ENCODE measurements at regions of chr19 and their contacts with region 1.

Region 1: GRCh38 chr19:54023191-54023590 is 31.8 kb downstream of the CACNG6 start:
- DNase-seq: no peak
- ATAC-seq: no peak
- H3K4me3 ChIP-seq: no peak overlapping the region
- H3K27ac ChIP-seq: no peak overlapping the region
- H3K4me1 ChIP-seq: peaks cover 12 to 25% of the 10 kb centered on the region in 2 experiments
- H3K27me3 ChIP-seq: no peaks in the 10 kb centered on the region
- CTCF ChIP-seq: no peak
- POLR2A ChIP-seq: no peak
- RAD21 ChIP-seq: no peak

Region 2: GRCh38 chr19:53792721-53793433 is 230.3 kb before region 1 on chr19:
- CTCF ChIA-PET with region 1: interaction called, 18 read pairs
- POLR2A ChIA-PET with region 1: no interaction called
- RAD21 ChIA-PET with region 1: no interaction called
- intact Hi-C with region 1: loop called (anchors 1 kb)
- DNase-seq: peak; percentile 82
- ATAC-seq: peak; percentile 100
- H3K4me3 ChIP-seq: no peak overlapping the region
- H3K27ac ChIP-seq: no peak overlapping the region
- H3K4me1 ChIP-seq: no peaks in the 10 kb centered on the region
- H3K27me3 ChIP-seq: no peaks in the 10 kb centered on the region
- CTCF ChIP-seq: peak; percentile 99
- POLR2A ChIP-seq: no peak
- RAD21 ChIP-seq: peak; percentile 90

Region 3: GRCh38 chr19:53808710-53809125 is 214.5 kb before region 1 on chr19:
- CTCF ChIA-PET with region 1: interaction called, 60 read pairs
- POLR2A ChIA-PET with region 1: no interaction called
- RAD21 ChIA-PET with region 1: interaction called, 4 to 11 read pairs
- intact Hi-C with region 1: loop called (anchors 1 kb)
- DNase-seq: peak; percentile 45
- ATAC-seq: peak; percentile 90
- H3K4me3 ChIP-seq: no peak overlapping the region
- H3K27ac ChIP-seq: no peak overlapping the region
- H3K4me1 ChIP-seq: no peaks in the 10 kb centered on the region
- H3K27me3 ChIP-seq: no peaks in the 10 kb centered on the region
- CTCF ChIP-seq: peak; percentile 66 to 71 (median 67); a peak in 5 of 6 replicates
- POLR2A ChIP-seq: no peak
- RAD21 ChIP-seq: peak; percentile 87

Region 4: GRCh38 chr19:53844849-53845246 is 178.3 kb before region 1 on chr19:
- CTCF ChIA-PET with region 1: interaction called, 22 read pairs
- POLR2A ChIA-PET with region 1: interaction called, 3 read pairs
- RAD21 ChIA-PET with region 1: interaction called in 1 of 2 experiments, 4 read pairs
- intact Hi-C with region 1: loop called (anchors 1 kb)
- DNase-seq: no peak
- ATAC-seq: no peak
- H3K4me3 ChIP-seq: no peak overlapping the region
- H3K27ac ChIP-seq: no peak overlapping the region
- H3K4me1 ChIP-seq: peaks cover 14 to 37% of the 10 kb centered on the region in 2 experiments
- H3K27me3 ChIP-seq: no peaks in the 10 kb centered on the region
- CTCF ChIP-seq: no peak
- POLR2A ChIP-seq: no peak
- RAD21 ChIP-seq: no peak

Region 5: DNA sequence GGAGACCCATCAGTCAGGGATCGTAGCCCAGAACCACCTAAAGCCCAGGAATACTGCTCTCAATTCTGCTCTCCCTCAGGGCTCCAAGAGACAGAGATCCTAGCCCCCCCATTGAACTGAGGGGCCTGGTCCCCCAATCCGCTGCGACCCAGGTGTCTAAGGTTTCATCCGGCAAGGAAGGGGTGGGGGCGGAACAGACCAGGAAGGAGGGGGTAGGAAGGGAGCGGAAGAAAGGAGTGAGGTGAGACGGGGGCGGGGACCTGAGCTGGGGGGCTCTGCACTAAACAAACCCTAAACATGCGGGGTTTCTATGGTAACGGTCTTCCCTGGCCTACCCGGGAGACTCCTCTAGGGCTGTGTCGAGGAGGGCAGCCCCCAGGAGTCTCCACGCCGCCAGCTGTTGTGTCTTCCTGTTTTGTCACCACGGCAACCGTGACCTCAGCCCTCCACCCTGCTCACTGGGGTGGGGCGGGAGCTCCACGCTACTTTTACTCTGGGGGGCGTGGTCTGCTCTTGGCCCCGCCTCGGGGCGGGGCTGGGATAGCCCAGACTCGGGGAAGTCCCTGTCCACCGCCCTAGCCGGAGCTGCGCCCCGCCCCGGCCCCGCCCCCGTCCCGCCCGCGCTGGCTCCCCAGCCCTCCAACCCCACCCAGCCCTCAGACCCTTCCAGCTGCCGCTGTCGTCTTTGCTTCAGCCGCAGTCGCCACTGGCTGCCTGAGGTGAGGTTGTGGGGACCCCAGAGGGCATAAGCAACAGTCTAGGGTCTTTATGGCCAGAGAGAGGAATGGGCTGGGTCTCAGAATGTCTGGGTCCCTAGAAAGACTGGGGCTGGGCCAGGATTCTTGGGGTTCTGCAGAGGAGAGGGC is 155.7 kb before region 1 on chr19 and contains the start of gene MYADM:
- CTCF ChIA-PET with region 1: interaction called, 21 read pairs
- POLR2A ChIA-PET with region 1: interaction called, 4 read pairs
- RAD21 ChIA-PET with region 1: no interaction called
- intact Hi-C with region 1: no loop called
- DNase-seq: peak; percentile 95
- ATAC-seq: peak; percentile 59
- H3K4me3 ChIP-seq: peak within 1 kb of the TSS; percentile 75 to 78
- H3K27ac ChIP-seq: peak within 1 kb of the TSS; percentile 80
- H3K4me1 ChIP-seq: peaks cover 18 to 47% of the 10 kb centered on the region in 2 experiments
- H3K27me3 ChIP-seq: no peaks in the 10 kb centered on the region
- CTCF ChIP-seq: no peak
- POLR2A ChIP-seq: peak; percentile 43
- RAD21 ChIP-seq: no peak
- total RNA-seq, gene MYADM: 79.6 TPM

Region 6: DNA sequence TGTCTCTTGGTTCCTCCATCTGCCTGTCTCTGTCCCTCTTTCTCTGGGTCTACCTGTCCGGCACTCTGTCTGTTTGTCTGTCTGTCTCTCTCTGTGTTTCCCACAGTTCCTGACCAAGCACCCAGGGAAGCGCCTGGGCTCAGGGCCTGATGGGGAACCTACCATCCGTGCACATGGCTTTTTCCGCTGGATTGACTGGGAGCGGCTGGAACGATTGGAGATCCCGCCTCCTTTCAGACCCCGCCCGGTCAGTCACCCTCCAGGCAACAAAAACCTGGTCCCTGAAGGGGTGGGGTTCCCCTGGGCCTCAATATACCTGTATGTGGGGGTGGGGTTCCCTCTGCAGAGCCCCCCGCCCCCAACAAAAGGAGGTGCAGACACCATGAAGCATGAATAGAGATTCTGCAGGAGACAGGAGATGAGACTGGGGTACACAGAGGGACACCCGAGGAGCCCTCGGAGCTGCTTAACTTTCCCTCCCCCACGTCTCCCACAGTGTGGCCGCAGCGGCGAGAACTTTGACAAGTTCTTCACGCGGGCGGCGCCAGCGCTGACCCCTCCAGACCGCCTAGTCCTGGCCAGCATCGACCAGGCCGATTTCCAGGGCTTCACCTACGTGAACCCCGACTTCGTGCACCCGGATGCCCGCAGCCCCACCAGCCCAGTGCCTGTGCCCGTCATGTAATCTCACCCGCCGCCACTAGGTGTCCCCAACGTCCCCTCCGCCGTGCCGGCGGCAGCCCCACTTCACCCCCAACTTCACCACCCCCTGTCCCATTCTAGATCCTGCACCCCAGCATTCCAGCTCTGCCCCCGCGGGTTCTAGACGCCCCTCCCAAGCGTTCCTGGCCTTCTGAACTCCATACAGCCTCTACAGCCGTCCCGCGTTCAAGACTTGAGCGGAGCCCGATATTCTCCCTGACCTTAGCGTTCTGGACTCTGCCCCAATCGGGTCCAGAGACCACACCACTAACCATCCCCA is 116.7 kb before region 1 on chr19:
- CTCF ChIA-PET with region 1: no interaction called
- POLR2A ChIA-PET with region 1: no interaction called
- RAD21 ChIA-PET with region 1: no interaction called
- intact Hi-C with region 1: loop called (anchors 5 kb)
- DNase-seq: no peak
- ATAC-seq: peak; percentile 82
- H3K4me3 ChIP-seq: no peak overlapping the region
- H3K27ac ChIP-seq: no peak overlapping the region
- H3K4me1 ChIP-seq: peaks cover 0 to 12% of the 10 kb centered on the region in 2 experiments; a peak in 2 of 4 replicates
- H3K27me3 ChIP-seq: peaks cover 14% of the 10 kb centered on the region; the same call in 1 of the 2 replicates
- CTCF ChIP-seq: peak; percentile 60 to 84 (median 83); a peak in 5 of 6 replicates
- POLR2A ChIP-seq: no peak
- RAD21 ChIP-seq: peak; percentile 75

Region 7: GRCh38 chr19:53982611-53983010 is 40.6 kb before region 1 on chr19:
- CTCF ChIA-PET with region 1: interaction called, 15 read pairs
- POLR2A ChIA-PET with region 1: interaction called, 3 read pairs
- RAD21 ChIA-PET with region 1: interaction called in 1 of 2 experiments, 4 read pairs
- intact Hi-C with region 1: no loop called
- DNase-seq: no peak
- ATAC-seq: no peak; the same call in 1 of the 2 replicates
- H3K4me3 ChIP-seq: no peak overlapping the region; a peak in 2 of 4 replicates
- H3K27ac ChIP-seq: no peak overlapping the region; the same call in 1 of the 2 replicates
- H3K4me1 ChIP-seq: peaks cover 16 to 48% of the 10 kb centered on the region in 2 experiments
- H3K27me3 ChIP-seq: no peaks in the 10 kb centered on the region
- CTCF ChIP-seq: no peak
- POLR2A ChIP-seq: no peak
- RAD21 ChIP-seq: no peak

Region 8: GRCh38 chr19:54102421-54103169 is 79.4 kb after region 1 on chr19 and contains the start of gene NDUFA3:
- CTCF ChIA-PET with region 1: no interaction called
- POLR2A ChIA-PET with region 1: no interaction called
- RAD21 ChIA-PET with region 1: no interaction called
- intact Hi-C with region 1: no loop called
- DNase-seq: peak; percentile 95
- ATAC-seq: peak; percentile 99
- H3K4me3 ChIP-seq: peak within 1 kb of the TSS; percentile 97 to 98
- H3K27ac ChIP-seq: peak within 1 kb of the TSS; percentile 73
- H3K4me1 ChIP-seq: peaks cover 0 to 5% of the 10 kb centered on the region in 2 experiments; a peak in 1 of 4 replicates
- H3K27me3 ChIP-seq: no peaks in the 10 kb centered on the region
- CTCF ChIP-seq: no peak
- POLR2A ChIP-seq: peak; percentile 13
- RAD21 ChIP-seq: no peak
- total RNA-seq, gene NDUFA3: 149 TPM